ENCODE measurements at regions of chr13 and their contacts with region 1.

Region 1: GRCh38 chr13:28636674-28637317 is 22.1 kb upstream of the POMP start:
- DNase-seq: peak; percentile 45 to 80 (median 62)
- H3K4me3 ChIP-seq: no peak overlapping the region
- H3K27ac ChIP-seq: no peak overlapping the region
- H3K4me1 ChIP-seq: peaks cover 9 to 20% of the 10 kb centered on the region in 2 donors
- H3K27me3 ChIP-seq: no peaks in the 10 kb centered on the region
- CTCF ChIP-seq: peak; percentile 71 to 87 (median 82)
- POLR2A ChIP-seq: no peak

Region 2: GRCh38 chr13:28138012-28138755 is 498.6 kb before region 1 on chr13 and contains the start of gene PAN3:
- intact Hi-C with region 1: loop called in 1 of 2 experiments (anchors 10 kb)
- DNase-seq: peak; percentile 90 to 94 (median 91)
- H3K4me3 ChIP-seq: peak within 1 kb of the TSS; percentile 76 to 100 (median 93)
- H3K27ac ChIP-seq: peak within 1 kb of the TSS; percentile 75 to 99 (median 96)
- H3K4me1 ChIP-seq: peaks cover 6 to 26% of the 10 kb centered on the region in 2 donors
- H3K27me3 ChIP-seq: no peaks in the 10 kb centered on the region
- CTCF ChIP-seq: no peak
- POLR2A ChIP-seq: peak; percentile 28 to 79
- total RNA-seq, gene PAN3: 15.2 to 31.4 (median 24.3) TPM

Region 3: GRCh38 chr13:28324181-28324789 is 312.5 kb before region 1 on chr13:
- intact Hi-C with region 1: loop called (anchors 2 to 10 kb)
- DNase-seq: peak; percentile 53 to 77 (median 67)
- H3K4me3 ChIP-seq: no peak overlapping the region
- H3K27ac ChIP-seq: no peak overlapping the region
- H3K4me1 ChIP-seq: no peaks in the 10 kb centered on the region
- H3K27me3 ChIP-seq: no peaks in the 10 kb centered on the region
- CTCF ChIP-seq: peak; percentile 61 to 78 (median 72)
- POLR2A ChIP-seq: no peak

Region 4: GRCh38 chr13:28423010-28423409 is 213.8 kb before region 1 on chr13:
- intact Hi-C with region 1: no loop called
- DNase-seq: peak; percentile 26 to 62 (median 39)
- H3K4me3 ChIP-seq: no peak overlapping the region
- H3K27ac ChIP-seq: no peak overlapping the region
- H3K4me1 ChIP-seq: no peaks in the 10 kb centered on the region
- H3K27me3 ChIP-seq: no peaks in the 10 kb centered on the region
- CTCF ChIP-seq: no peak
- POLR2A ChIP-seq: no peak